Lower leg skin (tissue), 4 donors: ENCODE measurements at regions of chr12 and their contacts with region 1.

Region 1: GRCh38 chr12:45713078-45713477 is 16.4 kb upstream of the ARID2 start:
- DNase-seq: no peak
- H3K4me3 ChIP-seq: no peak overlapping the region
- CTCF ChIP-seq: no peak
- POLR2A ChIP-seq: no peak

Region 2: DNA sequence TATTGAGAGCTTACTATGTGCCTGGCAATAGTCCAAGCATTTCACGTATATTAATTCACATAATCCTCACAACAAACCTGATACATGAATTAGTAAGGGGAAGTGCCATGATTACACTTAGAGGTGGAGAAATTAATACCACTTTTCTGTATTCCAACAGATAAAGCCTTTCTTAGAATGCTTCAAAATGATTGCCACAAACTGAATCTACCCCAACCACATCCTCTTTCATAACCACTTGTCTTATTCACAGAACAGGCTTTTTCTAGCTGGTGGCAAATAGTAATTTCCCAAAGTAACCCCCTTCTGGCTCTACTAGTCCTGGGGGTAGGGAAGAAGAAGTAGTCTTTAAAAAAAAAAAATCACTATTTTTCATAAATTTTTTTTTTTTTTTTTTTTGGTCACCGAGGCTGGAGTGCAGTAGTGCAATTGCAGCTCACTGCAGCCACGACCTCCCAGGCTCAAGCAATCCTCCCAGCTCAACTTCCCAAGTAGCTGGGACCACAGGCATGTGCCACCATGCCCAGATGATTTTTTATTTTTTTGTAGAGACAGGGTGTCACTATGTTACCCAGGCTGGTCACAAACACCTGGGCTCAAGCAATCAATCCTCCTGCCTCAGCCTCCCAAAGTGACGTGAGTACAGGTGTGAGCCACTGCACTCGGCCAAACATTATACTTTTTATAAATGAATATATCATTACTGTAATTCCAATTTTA is 42.6 kb before region 1 on chr12:
- intact Hi-C with region 1: loop called (anchors 5 kb)
- DNase-seq: no peak
- H3K4me3 ChIP-seq: no peak overlapping the region
- CTCF ChIP-seq: no peak
- POLR2A ChIP-seq: no peak